ENCODE measurements at regions of chr19 and their contacts with region 1.

Region 1: DNA sequence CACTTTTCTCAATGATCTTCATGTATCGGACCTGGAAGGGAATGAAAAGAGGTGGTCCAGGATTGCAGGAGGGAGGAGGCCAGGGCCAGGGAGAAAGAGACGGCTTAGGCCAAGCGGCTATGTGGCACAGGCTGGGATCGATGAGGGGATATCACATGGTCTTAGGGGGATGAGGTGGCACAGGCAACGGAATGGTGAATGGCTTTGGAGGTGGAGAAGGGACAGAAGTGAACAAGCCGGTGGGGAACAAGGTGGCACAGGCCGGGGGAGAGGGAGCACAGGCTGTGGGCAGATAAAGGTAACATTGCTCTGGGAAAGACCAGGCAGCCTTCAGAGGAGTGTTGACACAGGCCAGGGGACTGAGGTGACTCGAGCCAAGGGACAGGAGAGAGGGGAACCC is 5.7 kb upstream of the CDKN2D start:
- DNase-seq: no peak
- H3K4me3 ChIP-seq: no peak overlapping the region
- H3K27ac ChIP-seq: no peak overlapping the region
- H3K4me1 ChIP-seq: peaks cover 4% of the 10 kb centered on the region
- H3K27me3 ChIP-seq: no peaks in the 10 kb centered on the region
- CTCF ChIP-seq: no peak

Region 2: GRCh38 chr19:10486538-10486937 is 87.9 kb before region 1 on chr19:
- intact Hi-C with region 1: loop called (anchors 10 kb)
- DNase-seq: no peak
- H3K4me3 ChIP-seq: no peak overlapping the region
- H3K27ac ChIP-seq: no peak overlapping the region
- H3K4me1 ChIP-seq: no peaks in the 10 kb centered on the region
- H3K27me3 ChIP-seq: no peaks in the 10 kb centered on the region
- CTCF ChIP-seq: no peak

Measured in colonic mucosa (tissue), 4 donors.